Activated CD4-positive, alpha-beta T cell treated with anti-CD3 and anti-CD28 coated beads for 36 hours (primary cell): ENCODE measurements at regions of chr3 and their contacts with region 1.

Region 1: DNA sequence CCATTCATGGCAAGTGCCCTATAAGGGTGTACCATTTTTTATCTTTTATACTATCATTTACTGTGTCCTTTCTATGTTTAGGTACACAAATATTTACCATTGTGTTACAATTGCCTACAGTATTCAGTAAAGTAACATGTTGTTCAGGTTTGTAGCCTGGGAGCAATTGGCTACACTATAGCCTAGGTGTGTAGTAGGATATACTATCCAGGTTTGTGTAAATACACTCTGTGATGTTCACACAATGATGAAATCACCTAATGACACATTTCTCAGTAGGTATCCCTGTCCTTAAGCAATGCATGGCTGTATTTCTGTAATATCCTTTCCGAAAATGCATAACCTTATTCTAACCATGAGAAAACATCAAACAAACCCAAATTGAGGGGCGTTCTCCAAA is 17.9 kb upstream of the CNOT10 start:
- DNase-seq: no peak
- ATAC-seq: no peak
- H3K4me3 Mint-ChIP-seq: no peak overlapping the region
- H3K27ac Mint-ChIP-seq: no peak overlapping the region
- H3K4me1 Mint-ChIP-seq: no peaks in the 10 kb centered on the region
- H3K27me3 Mint-ChIP-seq: no peaks in the 10 kb centered on the region

Region 2: DNA sequence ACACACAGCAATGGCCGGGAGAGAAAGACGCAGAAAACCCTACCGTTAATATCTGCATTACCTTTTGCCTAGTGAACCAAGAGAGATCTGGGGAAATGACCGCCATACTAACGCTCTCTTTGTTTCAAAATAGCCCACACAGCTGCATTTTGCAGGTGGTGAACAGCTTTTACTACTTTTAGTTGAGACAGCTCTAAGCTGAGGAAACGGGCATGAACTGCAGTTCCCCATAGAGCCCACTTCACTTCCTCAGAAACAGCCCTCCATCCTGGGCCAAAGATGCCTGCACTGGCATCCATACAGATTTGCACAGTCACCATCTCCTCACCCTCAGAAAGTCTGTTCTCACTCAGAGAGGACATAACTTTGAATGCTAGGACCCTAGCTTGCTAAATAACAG is 640.5 kb before region 1 on chr3:
- CTCF ChIA-PET with region 1: no interaction called
- POLR2A ChIA-PET with region 1: no interaction called
- intact Hi-C with region 1: loop called in 1 of 2 experiments (anchors 10 kb)
- DNase-seq: no peak
- ATAC-seq: no peak
- H3K4me3 Mint-ChIP-seq: no peak overlapping the region
- H3K27ac Mint-ChIP-seq: no peak overlapping the region
- H3K4me1 Mint-ChIP-seq: no peaks in the 10 kb centered on the region
- H3K27me3 Mint-ChIP-seq: peaks cover 9% of the 10 kb centered on the region

Region 3: GRCh38 chr3:32593903-32594525 is 73.1 kb before region 1 on chr3:
- CTCF ChIA-PET with region 1: no interaction called
- POLR2A ChIA-PET with region 1: no interaction called
- intact Hi-C with region 1: no loop called
- DNase-seq: no peak
- ATAC-seq: no peak
- H3K4me3 Mint-ChIP-seq: no peak overlapping the region
- H3K27ac Mint-ChIP-seq: no peak overlapping the region
- H3K4me1 Mint-ChIP-seq: no peaks in the 10 kb centered on the region
- H3K27me3 Mint-ChIP-seq: peaks cover 2% of the 10 kb centered on the region